ENCODE measurements at regions of chr9 and their contacts with region 1.

Region 1: DNA sequence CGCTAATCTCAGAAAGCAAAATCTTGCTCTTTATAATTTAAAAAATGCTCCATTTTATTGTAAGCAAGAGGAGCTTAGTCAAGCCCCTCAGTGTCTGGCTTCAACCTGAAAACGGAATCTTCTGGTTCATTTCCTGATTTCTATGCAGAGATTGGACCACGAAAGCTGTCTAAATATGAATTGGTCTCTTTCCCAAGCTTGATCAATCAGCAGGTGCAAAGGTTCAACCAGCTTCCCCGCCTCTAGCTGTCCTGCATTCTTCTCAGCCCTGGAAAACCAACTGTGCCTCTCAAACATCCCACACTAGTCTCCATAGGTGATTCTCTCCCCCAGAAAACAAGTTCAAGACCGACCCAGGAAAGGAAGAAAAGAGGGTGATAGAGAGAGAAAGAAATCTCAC is 34.5 kb downstream of the FNBP1 start:
- DNase-seq: no peak
- H3K4me3 ChIP-seq: no peak overlapping the region
- H3K4me3 Mint-ChIP-seq: peak overlapping the region; percentile 6 to 74 (median 61)
- H3K27ac ChIP-seq: peak overlapping the region; percentile 21
- H3K27ac Mint-ChIP-seq: peak overlapping the region; percentile 83 to 99 (median 96)
- H3K4me1 ChIP-seq: peaks cover 70% of the 10 kb centered on the region
- H3K4me1 Mint-ChIP-seq: peaks cover 68 to 88% (median 87%) of the 10 kb centered on the region in 3 donors
- H3K27me3 ChIP-seq: no peaks in the 10 kb centered on the region
- H3K27me3 Mint-ChIP-seq: no peaks in the 10 kb centered on the region

Region 2: DNA sequence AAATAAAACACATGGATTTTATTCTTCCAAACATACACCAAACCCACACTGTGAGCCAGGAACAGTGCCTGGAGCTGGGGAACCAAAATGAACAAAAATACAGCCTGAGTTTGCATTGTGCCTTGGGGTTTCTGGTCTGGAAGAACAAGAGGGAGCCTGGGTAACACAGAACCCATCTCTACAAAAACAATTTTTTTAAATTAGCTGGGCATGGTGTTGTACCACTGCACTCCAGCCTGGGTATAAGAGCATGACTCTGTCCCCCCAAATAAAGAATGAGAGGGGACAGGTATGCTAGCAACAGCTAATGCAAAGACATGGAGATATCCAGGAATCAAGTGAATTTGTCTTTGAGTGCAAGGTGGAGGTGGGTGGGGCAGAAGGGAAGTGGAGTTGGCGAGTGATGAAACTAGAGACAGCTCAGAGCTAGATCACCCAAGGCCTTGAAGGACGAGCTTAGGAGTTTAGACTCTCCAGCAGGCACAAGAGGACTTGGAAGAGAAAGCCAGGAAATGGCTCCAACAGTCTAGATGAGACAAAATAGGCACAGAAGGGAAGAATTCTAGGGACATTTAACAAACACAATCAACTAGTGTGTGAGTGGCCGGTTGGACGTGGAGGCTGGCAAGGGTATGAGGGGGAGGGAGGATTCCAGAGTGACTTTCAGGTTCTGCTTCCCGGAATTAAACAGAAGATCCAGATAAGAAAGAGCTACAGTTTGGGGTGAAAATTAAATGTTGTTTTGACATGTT is 13.0 kb before region 1 on chr9:
- CTCF ChIA-PET with region 1: interaction called, 3 read pairs
- POLR2A ChIA-PET with region 1: interaction called, 10 read pairs
- DNase-seq: no peak
- H3K4me3 ChIP-seq: no peak overlapping the region
- H3K4me3 Mint-ChIP-seq: peak overlapping the region; percentile 28 to 80 (median 70)
- H3K27ac ChIP-seq: peak overlapping the region; percentile 47
- H3K27ac Mint-ChIP-seq: peak overlapping the region; percentile 84 to 98 (median 92)
- H3K4me1 ChIP-seq: peaks cover 76% of the 10 kb centered on the region
- H3K4me1 Mint-ChIP-seq: peaks cover 63 to 81% (median 75%) of the 10 kb centered on the region in 3 donors
- H3K27me3 ChIP-seq: no peaks in the 10 kb centered on the region
- H3K27me3 Mint-ChIP-seq: no peaks in the 10 kb centered on the region